GM23248 (cell line): ENCODE measurements at regions of chr12 and their contacts with region 1.

Region 1: DNA sequence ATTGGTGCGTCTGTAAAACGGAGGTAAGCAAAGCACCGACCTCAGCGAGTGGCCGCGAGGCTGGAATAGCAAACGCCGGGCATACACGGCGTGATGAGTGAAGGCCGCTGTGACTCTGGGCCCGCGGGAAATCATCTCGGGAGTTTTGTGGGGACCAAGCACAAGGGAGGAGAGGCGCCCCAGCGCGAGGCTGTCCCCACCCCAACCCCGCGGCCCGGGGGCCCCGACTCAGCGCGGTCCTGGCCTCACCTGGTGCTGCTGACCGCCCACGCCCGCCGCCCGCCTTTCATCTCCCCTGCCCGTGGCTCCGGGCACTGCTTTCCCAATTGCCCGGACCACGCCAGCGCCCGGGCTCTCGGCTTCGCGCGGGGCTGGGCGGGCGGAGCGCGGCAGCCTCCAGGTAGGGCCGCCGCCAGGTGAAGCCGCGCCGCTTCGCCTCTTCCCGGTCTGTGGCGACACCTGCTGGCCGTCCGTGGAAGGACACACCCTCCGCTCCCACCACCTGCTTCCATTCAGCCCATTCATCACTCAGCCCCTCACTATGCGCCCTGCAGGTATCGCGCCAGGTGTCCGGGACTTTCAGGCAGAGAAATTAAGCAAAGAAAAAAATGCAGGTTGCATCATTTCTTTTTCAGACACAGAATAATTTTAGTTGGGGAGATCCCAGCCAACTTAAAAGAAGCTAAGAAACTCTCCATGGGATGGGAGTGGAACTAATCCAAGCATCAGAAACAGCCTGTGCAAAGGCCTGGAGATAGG is 360.4 kb downstream of the MED13L start:
- DNase-seq: peak; percentile 36
- H3K4me3 ChIP-seq: no peak overlapping the region
- H3K27ac ChIP-seq: no peak overlapping the region
- H3K4me1 ChIP-seq: peaks cover 11% of the 10 kb centered on the region
- H3K27me3 ChIP-seq: no peaks in the 10 kb centered on the region

Region 2: GRCh38 chr12:113980537-113981337 is 1936.4 kb before region 1 on chr12:
- in situ Hi-C with region 1: loop called (anchors 25 kb)
- DNase-seq: peak; percentile 87
- H3K4me3 ChIP-seq: no peak overlapping the region
- H3K27ac ChIP-seq: no peak overlapping the region
- H3K4me1 ChIP-seq: no peaks in the 10 kb centered on the region
- H3K27me3 ChIP-seq: peaks cover 27% of the 10 kb centered on the region

Region 3: DNA sequence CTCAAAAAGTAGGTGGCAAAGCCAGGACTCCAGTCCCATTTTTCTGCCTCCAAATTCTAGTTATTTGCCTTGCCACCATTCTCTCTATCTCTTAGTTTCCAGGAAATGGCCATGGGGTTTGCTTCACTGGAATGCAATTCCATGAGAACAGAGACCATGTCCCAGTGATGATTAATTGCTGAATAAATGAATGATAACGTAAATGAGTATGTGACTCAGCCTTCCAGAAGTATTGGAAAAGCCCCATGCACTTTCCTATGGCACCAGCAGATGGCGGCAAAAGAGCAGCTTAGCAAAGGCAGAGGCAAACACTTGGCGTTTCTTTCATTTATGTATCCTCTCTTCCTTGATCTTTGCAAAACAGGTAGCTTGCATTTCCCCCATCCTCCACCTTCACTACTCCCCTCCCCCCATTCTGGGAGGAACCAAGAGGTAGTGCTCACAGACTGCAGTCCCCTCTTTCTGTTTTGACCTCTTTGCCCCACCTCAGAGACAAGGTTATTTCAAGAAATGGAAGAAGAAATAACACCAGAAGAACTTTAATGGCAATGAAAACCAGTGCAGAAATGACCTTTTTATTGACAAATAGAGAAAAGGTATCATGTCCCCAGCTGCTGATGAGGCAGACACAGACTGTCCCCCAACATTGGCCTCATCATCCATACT is 1254.4 kb before region 1 on chr12:
- in situ Hi-C with region 1: loop called (anchors 10 kb)
- DNase-seq: peak; percentile 89
- H3K4me3 ChIP-seq: no peak overlapping the region
- H3K27ac ChIP-seq: no peak overlapping the region
- H3K4me1 ChIP-seq: peaks cover 4% of the 10 kb centered on the region
- H3K27me3 ChIP-seq: no peaks in the 10 kb centered on the region